PC-3 (cell line): ENCODE measurements at regions of chr1 and their contacts with region 1.

Region 1: DNA sequence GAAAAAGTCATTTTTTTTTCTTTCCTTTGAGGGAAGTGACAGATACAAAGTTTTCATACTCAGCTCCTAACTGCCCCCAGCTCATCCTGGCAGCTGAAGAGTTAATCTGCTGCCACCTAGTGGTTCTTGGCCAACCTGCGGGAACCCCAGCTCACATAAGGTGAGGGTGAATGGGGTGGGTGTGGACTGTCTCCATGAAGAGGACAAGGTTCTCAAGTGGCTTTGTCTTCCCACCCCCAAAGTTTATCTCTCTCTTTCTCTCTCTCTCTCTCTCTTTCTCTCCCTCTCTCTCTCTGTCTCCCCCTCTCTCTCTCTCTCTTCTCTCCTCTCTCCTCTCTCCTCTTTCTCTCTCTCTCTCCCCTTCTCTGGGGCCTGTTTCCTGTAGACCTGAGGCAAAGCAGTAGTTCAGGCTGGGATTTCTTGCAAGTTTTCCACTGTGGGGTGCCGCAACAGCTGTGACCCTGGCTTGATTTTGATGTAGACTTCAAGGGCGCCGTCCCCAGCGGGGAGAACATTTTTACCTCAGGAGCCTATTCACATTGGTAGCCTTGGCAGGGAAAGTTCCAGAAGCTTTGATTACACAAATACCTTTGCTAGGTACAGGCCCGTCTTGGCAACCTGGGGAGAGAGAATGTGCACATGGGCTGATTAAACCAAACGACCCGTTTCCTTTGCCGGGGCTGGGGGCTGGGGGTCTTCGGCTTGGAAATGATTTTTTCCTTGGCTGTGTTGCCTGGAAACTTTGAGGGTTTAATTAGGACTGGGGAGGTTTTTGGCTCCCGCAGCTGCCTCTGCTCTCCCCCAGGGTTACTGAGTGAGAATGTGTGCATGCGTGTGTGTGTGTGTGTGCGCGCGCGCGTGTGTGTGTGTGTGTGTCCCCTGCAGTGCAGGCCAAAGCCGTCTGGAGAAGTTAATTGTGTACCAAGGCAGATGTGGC is 135.9 kb downstream of the TM2D1 start:
- DNase-seq: peak; percentile 88
- ATAC-seq: peak; percentile 98
- H3K4me3 ChIP-seq: no peak overlapping the region
- H3K27ac ChIP-seq: no peak overlapping the region
- H3K4me1 ChIP-seq: peaks cover 12% of the 10 kb centered on the region; the same call in 1 of the 2 replicates
- H3K27me3 ChIP-seq: no peaks in the 10 kb centered on the region
- CTCF ChIP-seq: peak; percentile 96

Region 2: DNA sequence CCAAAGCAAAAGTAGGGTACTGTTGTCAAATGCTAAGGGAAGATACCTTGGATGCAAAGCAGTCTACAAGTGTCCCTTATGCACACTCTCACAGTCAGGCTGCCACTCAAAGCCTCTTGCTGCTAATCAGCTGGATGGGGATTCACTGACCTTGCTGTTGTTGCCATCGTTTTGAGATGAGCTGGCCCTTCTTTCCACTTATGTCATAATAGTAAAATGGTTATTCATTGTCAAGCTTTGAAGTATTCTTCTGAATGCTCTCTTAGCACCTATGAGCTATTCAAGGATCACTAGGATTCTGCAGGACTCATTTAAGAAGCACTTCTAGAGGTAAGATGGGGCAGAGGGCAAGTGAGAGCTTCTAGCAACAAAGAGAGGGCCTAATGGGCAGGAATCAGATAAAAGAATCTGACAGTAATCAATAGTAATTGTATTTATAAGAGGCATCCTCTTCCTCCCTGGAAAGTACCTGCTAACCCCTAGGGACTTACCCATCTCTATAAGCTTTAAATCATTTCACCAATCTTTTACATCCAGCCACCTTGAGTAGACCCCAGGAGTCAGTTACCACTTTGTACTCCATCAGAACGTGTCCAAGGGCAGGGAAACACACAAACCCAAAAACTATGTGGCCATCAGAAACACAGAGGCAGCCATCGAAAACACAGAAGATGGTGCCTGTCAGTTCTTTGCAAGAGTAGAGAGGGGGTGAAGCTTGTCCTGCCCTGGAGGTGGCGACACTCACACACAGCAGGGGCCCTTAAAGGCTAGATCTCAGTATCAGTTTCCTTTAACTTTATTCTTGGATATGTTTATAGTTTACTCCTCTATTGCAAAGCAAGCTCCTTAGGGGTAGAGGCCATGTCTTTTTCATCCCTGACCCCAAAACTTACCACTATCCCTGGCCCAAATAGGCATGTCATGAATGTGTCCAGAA is 610.3 kb before region 1 on chr1:
- CTCF ChIA-PET with region 1: interaction called, 5 read pairs
- POLR2A ChIA-PET with region 1: no interaction called
- intact Hi-C with region 1: loop called (anchors 2 kb)
- DNase-seq: peak; percentile 64
- ATAC-seq: peak; percentile 94
- H3K4me3 ChIP-seq: no peak overlapping the region
- H3K27ac ChIP-seq: no peak overlapping the region
- H3K4me1 ChIP-seq: no peaks in the 10 kb centered on the region
- H3K27me3 ChIP-seq: no peaks in the 10 kb centered on the region
- CTCF ChIP-seq: peak; percentile 93

Region 3: DNA sequence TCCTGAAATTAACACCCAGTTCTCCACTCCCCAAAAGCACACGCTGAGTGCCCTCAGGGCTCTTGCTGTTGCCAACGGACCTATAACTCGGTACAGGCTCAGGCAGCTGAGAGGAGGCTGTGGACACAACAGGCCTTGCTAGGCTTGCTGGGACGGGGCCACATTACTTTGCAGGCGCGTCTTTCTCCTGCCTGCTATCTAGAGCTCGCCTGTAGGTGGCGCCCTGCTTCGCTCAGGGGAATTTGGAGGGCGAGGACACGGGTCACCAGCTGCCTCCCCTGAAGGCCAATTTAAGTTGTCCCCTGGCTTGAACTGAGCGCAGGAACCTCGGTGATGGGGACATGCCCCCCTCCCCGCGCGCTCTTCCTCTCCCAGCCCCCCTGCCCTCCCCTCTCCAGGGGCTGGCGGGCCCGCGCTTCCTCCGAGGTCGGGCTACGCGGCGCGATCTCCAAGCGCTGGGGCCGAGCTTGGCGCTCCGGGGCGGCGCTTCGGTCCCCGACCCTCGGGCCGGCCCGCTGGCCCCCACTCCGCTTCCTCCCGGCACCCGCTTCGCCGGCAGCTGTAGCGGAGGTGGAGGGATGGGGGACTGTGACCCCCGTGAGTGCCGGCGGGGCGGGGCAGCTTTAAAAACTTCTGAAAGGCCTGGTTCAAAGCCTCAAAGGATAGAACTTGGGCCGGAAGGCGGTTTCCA is 539.0 kb before region 1 on chr1:
- CTCF ChIA-PET with region 1: no interaction called
- POLR2A ChIA-PET with region 1: no interaction called
- intact Hi-C with region 1: loop called (anchors 10 kb)
- DNase-seq: peak; percentile 94
- ATAC-seq: peak; percentile 84
- H3K4me3 ChIP-seq: peak overlapping the region; percentile 87
- H3K27ac ChIP-seq: no peak overlapping the region
- H3K4me1 ChIP-seq: peaks cover 4% of the 10 kb centered on the region; the same call in 1 of the 2 replicates
- H3K27me3 ChIP-seq: no peaks in the 10 kb centered on the region
- CTCF ChIP-seq: peak; percentile 91

Region 4: GRCh38 chr1:61210435-61211154 is 378.4 kb before region 1 on chr1:
- CTCF ChIA-PET with region 1: no interaction called
- POLR2A ChIA-PET with region 1: no interaction called
- intact Hi-C with region 1: loop called (anchors 2 kb)
- DNase-seq: peak; percentile 15
- ATAC-seq: peak; percentile 58
- H3K4me3 ChIP-seq: no peak overlapping the region
- H3K27ac ChIP-seq: no peak overlapping the region
- H3K4me1 ChIP-seq: no peaks in the 10 kb centered on the region
- H3K27me3 ChIP-seq: no peaks in the 10 kb centered on the region
- CTCF ChIP-seq: peak; percentile 41; the same call in 1 of the 2 replicates

Region 5: DNA sequence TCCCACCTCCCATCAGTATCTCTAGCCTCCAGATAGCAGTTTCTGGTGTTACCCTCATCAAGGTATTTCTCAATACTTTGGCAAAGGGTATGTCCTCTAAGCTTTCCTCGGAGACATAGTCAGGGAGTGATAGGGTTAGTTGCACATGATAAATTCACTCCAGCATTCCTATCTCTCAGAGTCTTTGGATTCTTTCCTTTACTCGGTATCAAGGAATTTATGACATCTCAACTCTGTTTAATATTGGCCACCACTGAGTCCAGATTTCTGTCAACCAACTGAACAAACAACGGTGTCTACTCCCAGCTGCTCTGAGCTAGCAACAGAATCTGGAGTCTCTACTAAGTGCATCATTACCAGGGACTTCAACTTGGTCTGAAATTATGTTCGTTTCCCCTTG is 97.5 kb before region 1 on chr1:
- CTCF ChIA-PET with region 1: no interaction called
- POLR2A ChIA-PET with region 1: no interaction called
- intact Hi-C with region 1: loop called (anchors 10 kb)
- DNase-seq: no peak
- ATAC-seq: no peak
- H3K4me3 ChIP-seq: no peak overlapping the region
- H3K27ac ChIP-seq: no peak overlapping the region
- H3K4me1 ChIP-seq: peaks cover 29% of the 10 kb centered on the region
- H3K27me3 ChIP-seq: no peaks in the 10 kb centered on the region
- CTCF ChIP-seq: no peak

Region 6: GRCh38 chr1:61539720-61540462 is 49.1 kb before region 1 on chr1:
- CTCF ChIA-PET with region 1: no interaction called
- POLR2A ChIA-PET with region 1: no interaction called
- intact Hi-C with region 1: no loop called
- DNase-seq: peak; percentile 95
- ATAC-seq: peak; percentile 75
- H3K4me3 ChIP-seq: no peak overlapping the region
- H3K27ac ChIP-seq: peak overlapping the region; percentile 87
- H3K4me1 ChIP-seq: peaks cover 41% of the 10 kb centered on the region
- H3K27me3 ChIP-seq: no peaks in the 10 kb centered on the region
- CTCF ChIP-seq: no peak

Region 7: DNA sequence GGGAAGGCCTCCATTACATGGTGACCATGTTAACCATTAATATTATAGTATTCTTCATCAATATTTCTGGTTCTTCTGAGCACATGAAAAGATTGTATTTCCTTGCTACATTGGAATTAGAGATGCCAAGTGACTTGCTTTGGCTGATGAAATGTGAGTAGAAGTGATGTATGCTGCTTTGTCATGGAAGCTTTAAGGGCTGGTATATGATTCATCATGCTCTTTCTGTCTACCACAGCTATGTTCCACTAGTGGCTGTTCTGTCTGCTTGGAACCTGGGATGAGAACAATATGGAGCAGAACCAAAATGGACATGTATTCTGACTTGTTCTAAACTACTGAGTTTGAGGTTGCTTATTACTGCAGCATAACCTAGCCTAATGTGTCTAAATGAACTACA is 27.3 kb before region 1 on chr1:
- CTCF ChIA-PET with region 1: no interaction called
- POLR2A ChIA-PET with region 1: no interaction called
- intact Hi-C with region 1: no loop called
- DNase-seq: peak; percentile 17
- ATAC-seq: no peak; the same call in 1 of the 2 replicates
- H3K4me3 ChIP-seq: no peak overlapping the region
- H3K27ac ChIP-seq: no peak overlapping the region
- H3K4me1 ChIP-seq: no peaks in the 10 kb centered on the region
- H3K27me3 ChIP-seq: no peaks in the 10 kb centered on the region
- CTCF ChIP-seq: no peak

Region 8: DNA sequence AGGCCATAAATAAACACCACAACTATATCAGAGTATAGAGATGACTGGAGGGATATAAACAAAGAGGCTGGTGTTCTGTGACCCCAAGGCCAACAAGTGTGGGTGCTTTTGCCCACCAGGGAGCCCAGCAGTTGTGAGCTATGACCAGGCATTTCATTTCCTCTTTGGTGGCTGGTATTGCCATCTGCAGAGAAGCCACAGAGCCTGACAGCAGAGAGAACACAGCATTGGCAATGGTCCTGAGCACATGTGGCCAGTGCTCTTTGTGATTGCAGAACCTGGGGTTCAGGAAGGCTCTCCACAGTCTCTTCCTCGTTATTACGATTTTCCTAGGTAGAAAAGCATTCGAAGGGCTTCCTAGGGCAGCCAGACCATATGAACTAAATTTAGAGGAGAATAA is 23.6 kb after region 1 on chr1:
- CTCF ChIA-PET with region 1: no interaction called
- POLR2A ChIA-PET with region 1: no interaction called
- intact Hi-C with region 1: no loop called
- DNase-seq: no peak
- ATAC-seq: no peak
- H3K4me3 ChIP-seq: no peak overlapping the region
- H3K27ac ChIP-seq: no peak overlapping the region
- H3K4me1 ChIP-seq: no peaks in the 10 kb centered on the region
- H3K27me3 ChIP-seq: no peaks in the 10 kb centered on the region
- CTCF ChIP-seq: no peak